Breast epithelium (tissue), 4 donors: ENCODE measurements at regions of chr12 and their contacts with region 1.

Region 1: GRCh38 chr12:103640410-103640809 is 53.3 kb downstream of the STAB2 start:
- DNase-seq: no peak
- H3K4me3 ChIP-seq: no peak overlapping the region
- H3K27ac ChIP-seq: no peak overlapping the region
- H3K4me1 ChIP-seq: no peaks in the 10 kb centered on the region
- H3K27me3 ChIP-seq: no peaks in the 10 kb centered on the region
- CTCF ChIP-seq: no peak
- POLR2A ChIP-seq: no peak

Region 2: DNA sequence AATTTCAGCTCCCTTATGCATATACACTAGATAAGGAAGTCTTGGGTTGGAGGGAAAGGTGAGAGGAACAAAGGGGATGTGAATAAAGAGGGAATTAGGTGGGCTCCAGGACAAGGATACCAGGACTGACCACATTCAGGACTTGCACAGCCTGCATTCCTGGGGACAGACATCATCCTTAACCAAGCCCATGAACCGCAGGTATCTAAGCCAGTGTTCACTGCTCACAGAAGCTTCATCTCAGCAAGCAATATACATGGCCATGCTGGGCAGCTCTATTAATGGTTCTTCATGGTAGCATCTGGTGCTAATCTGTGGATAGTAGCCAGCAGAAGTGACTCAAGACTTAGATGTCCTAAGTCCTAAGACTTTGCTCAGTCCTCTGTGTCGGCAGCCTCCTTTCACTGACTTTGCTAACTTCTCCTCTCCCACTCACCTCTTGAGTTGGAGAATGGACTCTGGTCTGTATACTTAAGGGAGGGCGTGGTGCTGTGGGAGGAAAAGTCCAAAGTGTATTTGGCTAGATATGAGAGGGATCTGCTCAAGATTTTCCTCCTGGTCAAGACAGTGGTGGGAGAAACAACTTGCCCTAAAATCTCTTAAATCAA is 546.8 kb before region 1 on chr12:
- intact Hi-C with region 1: no loop called
- DNase-seq: no peak
- H3K4me3 ChIP-seq: no peak overlapping the region
- H3K27ac ChIP-seq: no peak overlapping the region
- H3K4me1 ChIP-seq: no peaks in the 10 kb centered on the region
- H3K27me3 ChIP-seq: no peaks in the 10 kb centered on the region
- CTCF ChIP-seq: no peak
- POLR2A ChIP-seq: no peak

Region 3: DNA sequence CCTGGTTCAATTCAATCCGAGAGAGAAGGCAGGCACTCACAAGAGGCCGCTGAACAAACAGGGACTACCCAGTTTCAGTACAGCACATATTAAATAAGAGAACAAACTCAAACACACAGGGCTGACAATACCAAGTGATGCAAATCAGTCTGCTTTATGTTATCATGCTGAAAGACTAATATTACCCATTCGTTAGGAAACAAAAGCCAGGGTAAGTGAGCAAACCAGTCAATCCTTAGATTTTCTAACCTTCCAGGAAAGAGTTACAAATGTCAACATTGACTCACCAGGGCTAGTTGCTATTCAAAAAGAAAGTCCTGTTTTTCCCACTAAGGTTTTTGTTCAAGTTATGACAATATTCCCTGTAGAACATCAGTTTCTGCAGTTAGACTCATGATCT is 390.8 kb before region 1 on chr12:
- intact Hi-C with region 1: no loop called
- DNase-seq: no peak
- H3K4me3 ChIP-seq: no peak overlapping the region
- H3K27ac ChIP-seq: no peak overlapping the region
- H3K4me1 ChIP-seq: no peaks in the 10 kb centered on the region
- H3K27me3 ChIP-seq: no peaks in the 10 kb centered on the region
- CTCF ChIP-seq: no peak
- POLR2A ChIP-seq: no peak

Region 4: DNA sequence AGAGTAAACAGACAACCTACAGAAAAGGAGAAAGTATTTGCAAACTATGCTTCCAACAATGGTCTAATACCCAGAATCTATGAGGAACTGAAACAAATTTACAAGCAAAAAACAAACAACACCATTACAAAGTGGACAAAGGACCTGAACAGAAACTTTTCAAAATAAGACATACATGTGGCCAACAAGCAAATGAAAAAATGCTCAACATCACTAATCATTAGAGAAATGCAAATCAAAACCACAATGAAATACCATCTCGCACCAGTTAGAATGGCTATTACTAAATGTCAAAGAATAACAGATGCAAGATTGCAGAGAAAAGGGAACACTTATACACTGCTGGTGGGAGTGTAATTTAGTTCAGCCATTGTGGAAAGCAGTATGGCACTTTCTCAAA is 270.5 kb before region 1 on chr12:
- intact Hi-C with region 1: no loop called
- DNase-seq: no peak
- H3K4me3 ChIP-seq: no peak overlapping the region
- H3K27ac ChIP-seq: no peak overlapping the region
- H3K4me1 ChIP-seq: no peaks in the 10 kb centered on the region
- H3K27me3 ChIP-seq: no peaks in the 10 kb centered on the region
- CTCF ChIP-seq: no peak
- POLR2A ChIP-seq: no peak

Region 5: DNA sequence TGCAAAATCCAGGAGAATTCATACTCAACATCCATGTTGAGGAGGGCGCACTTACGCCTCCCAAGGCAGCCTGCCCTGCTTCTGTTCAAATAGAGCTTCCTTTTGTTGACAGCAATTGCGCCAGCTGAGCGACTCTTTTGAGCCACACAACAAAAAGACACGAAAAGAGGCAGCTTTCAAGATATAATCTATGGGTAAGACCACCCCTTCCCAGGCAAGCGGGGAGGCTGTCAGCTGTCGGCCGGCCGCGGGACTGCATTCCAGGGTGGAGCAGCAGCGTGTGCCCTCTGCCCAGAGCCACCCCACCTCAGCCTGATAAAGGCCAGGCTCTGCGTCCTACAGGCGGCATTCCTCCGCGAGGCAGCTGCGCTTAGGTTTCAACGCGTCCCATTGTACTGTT is 69.1 kb before region 1 on chr12:
- intact Hi-C with region 1: loop called (anchors 5 kb)
- DNase-seq: no peak
- H3K4me3 ChIP-seq: no peak overlapping the region
- H3K27ac ChIP-seq: no peak overlapping the region
- H3K4me1 ChIP-seq: no peaks in the 10 kb centered on the region
- H3K27me3 ChIP-seq: no peaks in the 10 kb centered on the region
- CTCF ChIP-seq: no peak
- POLR2A ChIP-seq: no peak

Region 6: DNA sequence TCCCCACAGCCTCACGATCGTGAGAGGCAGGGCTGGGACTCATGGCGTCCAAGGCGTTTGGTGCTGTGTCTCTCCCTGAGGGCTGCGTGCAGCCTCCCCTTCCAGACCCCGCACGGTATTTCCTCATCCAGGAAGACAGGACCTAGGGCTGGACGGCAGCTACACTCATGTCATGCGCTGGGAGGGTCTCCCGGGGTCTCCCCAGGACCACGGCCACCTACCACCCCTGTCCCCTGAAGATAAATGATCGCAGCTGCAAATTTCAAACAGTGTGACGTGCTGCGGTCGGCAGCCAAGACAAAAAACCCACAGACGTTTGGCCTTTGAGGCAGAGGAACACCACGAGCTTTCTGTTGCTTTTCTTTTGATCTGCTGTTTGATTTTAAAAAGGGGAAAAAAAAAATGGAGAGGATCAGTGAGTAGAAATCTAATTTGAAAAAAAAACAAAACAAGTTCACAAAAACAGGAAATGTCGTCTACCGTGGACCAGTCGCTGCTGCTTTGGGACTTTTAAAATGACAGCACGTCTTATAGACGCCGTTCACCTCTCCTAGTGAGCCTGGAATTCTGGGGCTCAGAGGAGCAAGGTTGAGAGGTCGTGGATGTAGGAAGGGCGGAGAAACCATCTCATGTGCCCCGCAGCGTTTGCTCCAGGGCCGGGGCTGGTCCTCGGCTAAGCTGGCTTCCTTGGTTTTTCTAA is 1080.1 kb after region 1 on chr12:
- intact Hi-C with region 1: no loop called
- DNase-seq: no peak
- H3K4me3 ChIP-seq: peak overlapping the region; percentile 26 to 54 (median 32)
- H3K27ac ChIP-seq: peak overlapping the region; percentile 48 to 81
- H3K4me1 ChIP-seq: no peaks in the 10 kb centered on the region
- H3K27me3 ChIP-seq: no peaks in the 10 kb centered on the region
- CTCF ChIP-seq: no peak
- POLR2A ChIP-seq: no peak